A549 (cell line): ENCODE measurements at regions of chr9 and their contacts with region 1.

Region 1: GRCh38 chr9:136312436-136312835 is 8.5 kb upstream of the CCDC187 start:
- DNase-seq: peak; percentile 48 to 74
- ATAC-seq: peak; percentile 71 to 89
- H3K4me3 ChIP-seq: no peak overlapping the region
- H3K27ac ChIP-seq: no peak overlapping the region
- H3K4me1 ChIP-seq: peaks cover 8% of the 10 kb centered on the region; the same call in 2 of the 3 replicates
- CTCF ChIP-seq: peak; percentile 50
- EP300 ChIP-seq: no peak
- POLR2A ChIP-seq: no peak
- RAD21 ChIP-seq: peak; percentile 69 to 78; a peak in 4 of 5 replicates

Region 2: DNA sequence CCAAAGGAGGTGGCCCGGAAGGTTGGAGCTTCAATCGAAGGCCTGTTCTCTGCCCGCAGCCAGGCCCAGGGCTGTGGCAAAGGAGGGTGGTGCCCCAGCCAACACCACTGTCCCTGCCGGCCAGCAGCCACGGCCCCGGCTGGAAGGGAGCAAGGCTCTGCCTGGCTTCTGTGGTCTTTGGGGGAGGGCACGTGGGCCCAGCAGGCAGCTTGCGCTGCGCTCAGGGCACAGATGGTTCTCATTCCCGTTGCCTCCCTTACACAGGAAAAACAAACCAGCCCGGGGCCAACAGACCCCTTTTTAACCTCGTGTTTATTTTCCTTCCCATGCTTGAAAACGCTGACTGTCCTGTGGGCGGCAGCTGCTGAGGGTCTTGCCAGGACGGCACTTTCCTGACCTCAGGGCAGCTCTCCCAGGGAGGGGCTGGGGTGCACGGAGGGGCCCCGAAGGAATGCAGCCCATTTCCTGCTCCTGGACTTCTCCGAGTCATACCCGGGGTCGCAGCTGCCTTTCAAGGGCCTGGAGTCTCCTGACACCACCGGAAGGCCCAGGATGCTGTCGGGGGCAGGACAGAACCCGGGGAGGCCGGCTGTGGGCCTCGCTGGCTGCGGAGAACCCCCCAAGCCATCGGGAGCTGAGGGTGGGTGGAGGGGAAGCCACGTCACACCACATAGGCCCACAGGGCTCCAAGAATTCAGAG is 13.8 kb after region 1 on chr9:
- CTCF ChIA-PET with region 1: interaction called, 31 read pairs
- POLR2A ChIA-PET with region 1: no interaction called
- DNase-seq: no peak
- ATAC-seq: no peak
- H3K4me3 ChIP-seq: no peak overlapping the region
- H3K27ac ChIP-seq: peak overlapping the region in 1 of 2 experiments; percentile 89; a peak in 4 of 6 replicates
- H3K4me1 ChIP-seq: peaks cover 18% of the 10 kb centered on the region
- CTCF ChIP-seq: no peak
- EP300 ChIP-seq: no peak
- POLR2A ChIP-seq: no peak
- RAD21 ChIP-seq: no peak

Region 3: DNA sequence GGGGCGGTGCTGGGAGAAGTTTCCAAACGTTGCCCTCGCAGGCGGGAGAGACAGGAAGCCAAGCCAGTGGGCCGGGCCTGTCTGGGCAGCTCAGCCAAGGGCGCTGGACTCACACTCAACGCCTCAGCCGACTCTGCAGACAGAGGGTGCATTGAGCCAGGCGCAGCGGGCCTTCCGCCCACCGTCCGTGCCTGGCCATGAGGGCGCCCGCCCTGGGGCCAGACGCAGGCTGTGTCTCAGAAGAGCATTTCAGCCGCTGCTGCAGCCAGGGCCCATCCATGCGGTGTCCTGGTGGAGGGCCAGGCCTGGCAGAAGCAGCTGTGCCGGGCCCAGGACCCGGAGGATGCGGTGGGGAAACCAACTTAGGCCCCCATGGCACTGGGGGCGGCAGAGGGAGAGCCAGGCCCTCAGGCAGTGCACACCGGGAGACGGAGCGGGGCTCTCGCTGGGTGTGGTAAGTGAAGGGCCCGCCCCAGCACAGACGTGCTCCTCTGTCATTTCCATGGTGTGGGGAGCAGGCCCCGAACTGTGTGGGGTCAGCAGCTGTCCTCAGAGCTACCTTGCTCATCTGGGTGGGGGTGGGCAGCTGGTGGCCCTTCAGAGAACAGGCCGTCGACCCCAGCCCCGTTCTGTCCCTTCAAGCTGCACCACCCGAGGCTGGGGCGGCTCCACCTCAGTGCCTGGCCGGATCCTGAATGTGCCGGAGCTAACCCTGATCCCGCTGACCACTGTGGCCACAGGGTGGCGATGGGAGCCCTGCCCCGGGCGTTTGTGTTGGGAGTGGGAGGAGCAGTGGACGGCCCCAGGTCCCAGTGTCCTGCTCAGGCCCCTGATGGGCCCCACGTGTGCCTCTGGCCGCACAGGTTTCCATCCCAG is 33.1 kb after region 1 on chr9:
- CTCF ChIA-PET with region 1: interaction called, 17 read pairs
- POLR2A ChIA-PET with region 1: no interaction called
- DNase-seq: peak; percentile 52 to 57
- ATAC-seq: peak; percentile 70 to 87
- H3K4me3 ChIP-seq: no peak overlapping the region
- H3K27ac ChIP-seq: peak overlapping the region in 1 of 2 experiments; percentile 73; a peak in 3 of 6 replicates
- H3K4me1 ChIP-seq: peaks cover 8% of the 10 kb centered on the region; the same call in 2 of the 3 replicates
- CTCF ChIP-seq: peak; percentile 34; the same call in 2 of the 3 replicates
- EP300 ChIP-seq: no peak
- POLR2A ChIP-seq: no peak
- RAD21 ChIP-seq: peak; percentile 36 to 52